Activated T-helper 1 cell treated with anti-CD3 and anti-CD28 coated beads, Interleukin-12 subunit alpha, Interleukin-12 subunit beta, Interleukin-2, Interleukin-4 antibody, amounts not matched to agents 30 ng/mL and 10 ng/mL and 1 ng/mL, durations not matched to agents 14 hours and 24 hours and 36 hours (primary cell): ENCODE measurements at regions of chr12 and their contacts with region 1.

Region 1: DNA sequence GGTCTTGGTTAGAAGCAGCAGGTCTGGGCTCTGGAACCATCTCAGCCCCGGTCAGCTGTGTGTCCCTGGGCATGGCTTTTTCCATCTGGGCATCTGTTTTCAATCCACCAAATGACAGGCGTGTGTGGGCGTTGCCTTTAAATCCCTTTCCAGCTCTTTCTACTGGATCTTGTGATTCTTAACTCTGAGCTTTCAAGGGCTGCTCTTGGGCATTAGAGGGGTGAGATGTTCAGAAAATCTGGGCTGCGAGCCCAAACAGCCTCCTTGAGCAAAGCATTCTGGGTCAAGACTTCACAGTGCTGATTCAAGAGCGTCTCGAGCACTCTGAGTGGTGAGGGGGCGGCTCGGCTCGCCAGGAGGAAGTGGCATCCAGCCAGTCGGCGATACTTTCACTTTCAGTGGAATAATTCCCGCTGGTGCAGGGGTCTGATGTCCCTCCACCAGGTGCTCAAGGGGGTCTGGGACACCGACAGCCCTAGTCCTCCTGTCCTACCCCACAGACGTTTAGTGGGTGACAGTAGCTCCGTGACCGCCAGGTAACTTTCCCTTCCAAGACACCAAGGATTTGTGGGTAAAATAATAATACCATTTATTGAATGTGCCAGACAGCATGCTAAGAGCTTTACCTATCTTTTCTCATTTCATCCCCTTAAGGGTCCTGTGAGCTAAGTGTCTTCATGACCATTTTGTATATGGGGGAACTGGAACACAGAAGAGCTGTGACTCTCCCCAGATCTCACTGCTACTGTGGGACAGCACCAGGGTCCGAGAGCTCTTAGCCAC is 114.0 kb downstream of the PLXNC1 start:
- DNase-seq: peak; percentile 56
- H3K4me3 Mint-ChIP-seq: peak overlapping the region; percentile 84
- H3K27ac Mint-ChIP-seq: peak overlapping the region; percentile 96
- H3K4me1 Mint-ChIP-seq: peaks cover 55% of the 10 kb centered on the region
- H3K27me3 Mint-ChIP-seq: no peaks in the 10 kb centered on the region

Region 2: DNA sequence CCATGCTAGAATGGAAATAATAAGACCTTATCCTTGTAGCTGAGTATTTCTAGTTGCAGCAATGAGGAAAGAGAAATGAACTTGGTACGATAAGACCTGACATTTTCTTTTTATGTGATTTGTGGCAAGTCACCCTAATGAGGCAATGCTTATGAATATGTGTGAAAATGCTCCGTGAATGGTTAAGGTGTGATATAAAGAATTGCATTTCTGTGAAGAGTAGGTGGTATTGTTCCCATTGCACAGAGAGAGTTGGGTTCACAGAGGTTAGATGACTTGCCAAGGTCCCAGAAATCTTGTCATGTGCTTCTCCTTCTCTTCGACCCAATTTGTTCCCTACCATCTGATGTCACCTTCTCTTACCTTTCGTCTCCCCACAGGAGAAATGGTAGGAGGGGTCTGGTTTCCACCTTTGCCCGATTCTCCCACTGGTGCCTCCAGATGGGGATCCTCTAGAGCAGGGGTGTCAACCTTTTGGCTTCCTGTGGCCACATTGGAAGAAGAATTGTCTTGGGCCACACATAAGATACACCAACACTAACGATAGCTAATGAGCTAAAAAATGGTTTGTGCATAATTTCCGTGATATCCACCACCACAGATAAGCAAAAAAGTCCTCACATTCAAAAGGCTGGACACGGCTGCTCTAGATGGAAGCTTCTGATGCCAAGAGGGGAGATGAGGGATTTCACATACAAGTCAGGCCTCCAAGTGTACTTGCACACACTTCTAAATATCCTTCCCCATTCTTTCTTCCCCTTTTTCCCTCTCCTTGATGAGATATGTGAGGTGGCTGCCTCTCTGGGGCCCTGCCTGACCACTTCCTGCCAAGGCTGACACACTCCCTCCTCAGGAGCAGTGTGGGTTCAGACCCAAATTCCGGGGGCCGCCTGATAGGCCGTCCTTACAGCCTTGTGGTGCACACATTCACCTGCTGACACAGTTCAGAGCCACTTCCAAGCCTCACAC is 18.0 kb before region 1 on chr12:
- intact Hi-C with region 1: loop called (anchors 1 kb)
- DNase-seq: peak; percentile 25
- H3K4me3 Mint-ChIP-seq: peak overlapping the region; percentile 25
- H3K27ac Mint-ChIP-seq: peak overlapping the region; percentile 50
- H3K4me1 Mint-ChIP-seq: peaks cover 41% of the 10 kb centered on the region
- H3K27me3 Mint-ChIP-seq: no peaks in the 10 kb centered on the region

Region 3: DNA sequence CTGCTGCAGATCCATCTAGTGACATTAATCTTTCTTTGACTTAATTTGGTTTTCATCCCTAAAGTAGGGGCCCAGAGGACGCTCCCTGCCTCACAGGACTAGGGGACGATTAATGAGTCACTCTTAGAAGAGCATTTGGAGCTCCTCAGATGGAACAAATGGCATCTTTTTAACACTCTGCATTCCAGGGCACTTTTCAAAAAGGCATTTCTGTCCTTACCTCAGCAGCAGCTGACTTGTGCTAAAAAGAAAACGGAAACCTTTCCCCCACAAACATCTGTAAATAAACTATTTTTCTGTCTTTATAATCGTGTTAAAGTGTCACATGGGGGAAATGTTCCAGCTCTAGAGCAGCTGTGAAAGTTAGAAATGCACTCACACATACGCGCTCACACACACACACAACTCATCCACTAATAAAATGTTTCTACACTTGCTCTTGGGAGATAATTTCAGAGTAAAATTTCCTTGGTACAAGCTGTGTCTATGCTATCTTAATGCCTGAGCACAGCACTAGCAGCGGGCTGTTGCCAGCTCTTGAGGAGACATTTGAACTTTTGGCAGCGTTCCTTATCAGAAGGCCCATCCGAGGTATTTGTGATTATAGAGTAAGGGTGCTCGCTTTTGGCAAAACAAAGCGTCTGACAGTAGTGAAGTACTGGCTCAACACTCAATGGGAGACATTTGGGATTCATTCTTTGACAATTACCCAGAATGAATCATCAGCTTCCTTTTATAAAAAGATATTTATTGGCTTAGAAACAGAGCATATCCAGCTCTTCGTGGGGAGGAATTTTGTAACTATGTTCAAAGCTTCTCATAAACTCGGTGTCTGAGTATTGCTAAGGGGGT is 27.3 kb after region 1 on chr12:
- intact Hi-C with region 1: no loop called
- DNase-seq: no peak
- H3K4me3 Mint-ChIP-seq: no peak overlapping the region
- H3K27ac Mint-ChIP-seq: no peak overlapping the region
- H3K4me1 Mint-ChIP-seq: peaks cover 12% of the 10 kb centered on the region
- H3K27me3 Mint-ChIP-seq: no peaks in the 10 kb centered on the region

Region 4: DNA sequence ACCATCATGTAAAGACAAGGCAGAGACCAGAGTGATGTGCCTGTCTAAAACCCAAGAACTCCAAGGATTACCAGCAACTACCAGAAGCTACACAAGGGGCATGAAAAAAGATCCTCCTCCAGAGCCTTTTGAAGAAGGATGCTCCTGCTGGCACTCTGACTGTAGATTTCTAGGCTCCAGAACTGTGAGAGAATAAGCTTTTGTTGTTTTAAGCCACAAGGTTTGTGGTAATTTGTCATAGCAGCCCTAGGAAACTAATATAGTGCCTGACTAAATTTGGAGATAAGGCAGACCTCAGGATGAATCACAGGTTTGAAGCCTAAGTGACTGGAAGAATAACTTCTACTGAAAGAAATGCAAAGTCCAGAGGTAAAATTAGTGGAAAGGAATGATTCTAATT is 64.3 kb after region 1 on chr12:
- intact Hi-C with region 1: loop called (anchors 2 kb)
- DNase-seq: no peak
- H3K4me3 Mint-ChIP-seq: no peak overlapping the region
- H3K27ac Mint-ChIP-seq: peak overlapping the region; percentile 51
- H3K4me1 Mint-ChIP-seq: peaks cover 29% of the 10 kb centered on the region
- H3K27me3 Mint-ChIP-seq: no peaks in the 10 kb centered on the region

Region 5: GRCh38 chr12:94379479-94380113 is 117.2 kb after region 1 on chr12:
- intact Hi-C with region 1: loop called (anchors 1 kb)
- DNase-seq: peak; percentile 2
- H3K4me3 Mint-ChIP-seq: peak overlapping the region; percentile 3
- H3K27ac Mint-ChIP-seq: peak overlapping the region; percentile 79
- H3K4me1 Mint-ChIP-seq: peaks cover 58% of the 10 kb centered on the region
- H3K27me3 Mint-ChIP-seq: no peaks in the 10 kb centered on the region

Region 6: GRCh38 chr12:94644141-94644979 is 381.9 kb after region 1 on chr12:
- intact Hi-C with region 1: loop called (anchors 2 kb)
- DNase-seq: no peak
- H3K4me3 Mint-ChIP-seq: peak overlapping the region; percentile 63
- H3K27ac Mint-ChIP-seq: peak overlapping the region; percentile 7
- H3K4me1 Mint-ChIP-seq: peaks cover 46% of the 10 kb centered on the region
- H3K27me3 Mint-ChIP-seq: peaks cover 68% of the 10 kb centered on the region

Region 7: DNA sequence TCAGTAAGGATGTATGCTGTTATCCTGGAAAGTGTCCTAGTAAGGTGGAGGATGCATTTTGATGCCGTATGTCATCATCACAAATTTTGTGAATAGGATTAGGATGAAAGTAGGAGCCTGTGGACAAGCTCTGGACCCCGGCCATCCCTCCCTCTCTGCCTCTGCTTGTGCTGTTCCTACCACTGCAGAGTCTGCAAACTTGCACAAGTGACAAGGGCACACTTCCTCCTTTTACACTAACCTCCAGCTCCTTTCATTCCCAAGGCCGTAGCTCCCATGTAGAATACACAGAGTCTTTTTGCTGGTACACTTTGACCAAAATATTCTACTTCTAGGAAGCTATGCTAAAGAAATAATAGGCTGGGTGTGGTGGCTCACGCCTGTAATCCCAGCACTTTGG is 401.3 kb after region 1 on chr12:
- intact Hi-C with region 1: no loop called
- DNase-seq: no peak
- H3K4me3 Mint-ChIP-seq: no peak overlapping the region
- H3K27ac Mint-ChIP-seq: no peak overlapping the region
- H3K4me1 Mint-ChIP-seq: no peaks in the 10 kb centered on the region
- H3K27me3 Mint-ChIP-seq: peaks cover 17% of the 10 kb centered on the region